Mucosa of descending colon (tissue), 3 donors: ENCODE measurements at regions of chr11 and their contacts with region 1.

Region 1: GRCh38 chr11:59659981-59660380 is 8.9 kb downstream of the PATL1 start:
- DNase-seq: no peak
- ATAC-seq: no peak
- H3K4me3 ChIP-seq: no peak overlapping the region
- H3K4me1 ChIP-seq: no peaks in the 10 kb centered on the region
- CTCF ChIP-seq: no peak

Region 2: GRCh38 chr11:59368238-59369022 is 291.6 kb before region 1 on chr11:
- intact Hi-C with region 1: no loop called
- DNase-seq: no peak
- ATAC-seq: peak; percentile 37
- H3K4me3 ChIP-seq: no peak overlapping the region
- H3K4me1 ChIP-seq: no peaks in the 10 kb centered on the region
- CTCF ChIP-seq: no peak

Region 3: GRCh38 chr11:59601788-59602187 is 58.2 kb before region 1 on chr11:
- intact Hi-C with region 1: loop called in 1 of 2 experiments (anchors 10 kb)
- DNase-seq: no peak
- ATAC-seq: no peak
- H3K4me3 ChIP-seq: no peak overlapping the region
- H3K4me1 ChIP-seq: no peaks in the 10 kb centered on the region
- CTCF ChIP-seq: no peak

Region 4: DNA sequence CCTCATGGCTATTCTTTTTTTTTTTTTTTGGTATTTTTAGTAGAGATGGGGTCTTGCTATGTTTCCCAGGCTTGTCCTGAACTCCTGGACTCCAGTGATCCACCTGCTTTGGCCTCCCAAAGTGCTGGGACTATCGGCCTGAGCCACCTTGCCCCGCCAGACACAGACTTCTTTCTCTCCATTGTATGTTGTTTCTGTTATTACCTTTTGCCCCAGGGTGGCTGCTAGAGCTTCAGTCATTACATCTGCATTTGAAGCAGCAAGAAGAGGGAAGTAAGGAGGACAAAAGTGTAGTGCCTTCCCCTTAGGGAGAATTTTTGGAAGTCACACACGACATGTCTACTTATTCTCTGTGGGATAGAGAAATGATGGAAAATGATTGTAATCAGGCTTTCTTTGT is 34.3 kb before region 1 on chr11:
- intact Hi-C with region 1: no loop called
- DNase-seq: no peak
- ATAC-seq: no peak
- H3K4me3 ChIP-seq: no peak overlapping the region
- H3K4me1 ChIP-seq: no peaks in the 10 kb centered on the region
- CTCF ChIP-seq: no peak